ENCODE measurements at regions of chr1 and their contacts with region 1.

Region 1: GRCh38 chr1:167715157-167715999 is 6.4 kb upstream of the MPZL1 start:
- DNase-seq: peak; percentile 97
- H3K4me3 Mint-ChIP-seq: peak overlapping the region; percentile 88
- H3K27ac Mint-ChIP-seq: peak overlapping the region; percentile 91
- H3K4me1 Mint-ChIP-seq: peaks cover 16% of the 10 kb centered on the region
- H3K27me3 Mint-ChIP-seq: no peaks in the 10 kb centered on the region
- CTCF ChIP-seq: peak; percentile 98

Region 2: GRCh38 chr1:167737169-167737568 is 21.8 kb after region 1 on chr1:
- CTCF ChIA-PET with region 1: interaction called, 10 read pairs
- POLR2A ChIA-PET with region 1: no interaction called
- intact Hi-C with region 1: no loop called
- DNase-seq: no peak
- H3K4me3 Mint-ChIP-seq: no peak overlapping the region
- H3K27ac Mint-ChIP-seq: no peak overlapping the region
- H3K4me1 Mint-ChIP-seq: peaks cover 5% of the 10 kb centered on the region
- H3K27me3 Mint-ChIP-seq: no peaks in the 10 kb centered on the region
- CTCF ChIP-seq: no peak

Region 3: GRCh38 chr1:167803358-167804207 is 88.2 kb after region 1 on chr1:
- CTCF ChIA-PET with region 1: interaction called, 32 read pairs
- POLR2A ChIA-PET with region 1: interaction called, 202 read pairs
- intact Hi-C with region 1: loop called (anchors 1 kb)
- DNase-seq: peak; percentile 95
- H3K4me3 Mint-ChIP-seq: peak overlapping the region; percentile 3
- H3K27ac Mint-ChIP-seq: no peak overlapping the region
- H3K4me1 Mint-ChIP-seq: peaks cover 43% of the 10 kb centered on the region
- H3K27me3 Mint-ChIP-seq: no peaks in the 10 kb centered on the region
- CTCF ChIP-seq: peak; percentile 97